ENCODE measurements at regions of chr10 and their contacts with region 1.

Region 1: GRCh38 chr10:15439341-15439842 is 68.3 kb upstream of the FAM171A1 start:
- DNase-seq: peak; percentile 59
- ATAC-seq: peak; percentile 87

Region 2: GRCh38 chr10:15824498-15824897 is 385.1 kb after region 1 on chr10:
- intact Hi-C with region 1: loop called (anchors 5 kb)
- DNase-seq: no peak
- ATAC-seq: no peak

Measured in Right ventricle myocardium superior (tissue), 1 donor.